ENCODE measurements at regions of chr13 and their contacts with region 1.

Region 1: GRCh38 chr13:52968074-52968700 is 60.4 kb upstream of the OLFM4 start:
- DNase-seq: peak; percentile 16
- ATAC-seq: peak; percentile 100
- H3K4me3 ChIP-seq: no peak overlapping the region
- H3K27ac ChIP-seq: no peak overlapping the region
- H3K4me1 ChIP-seq: no peaks in the 10 kb centered on the region
- H3K27me3 ChIP-seq: no peaks in the 10 kb centered on the region; a peak in 1 of 4 replicates
- CTCF ChIP-seq: peak; percentile 98 to 100 (median 99)
- EP300 ChIP-seq: no peak
- POLR2A ChIP-seq: no peak
- RAD21 ChIP-seq: peak; percentile 91

Region 2: DNA sequence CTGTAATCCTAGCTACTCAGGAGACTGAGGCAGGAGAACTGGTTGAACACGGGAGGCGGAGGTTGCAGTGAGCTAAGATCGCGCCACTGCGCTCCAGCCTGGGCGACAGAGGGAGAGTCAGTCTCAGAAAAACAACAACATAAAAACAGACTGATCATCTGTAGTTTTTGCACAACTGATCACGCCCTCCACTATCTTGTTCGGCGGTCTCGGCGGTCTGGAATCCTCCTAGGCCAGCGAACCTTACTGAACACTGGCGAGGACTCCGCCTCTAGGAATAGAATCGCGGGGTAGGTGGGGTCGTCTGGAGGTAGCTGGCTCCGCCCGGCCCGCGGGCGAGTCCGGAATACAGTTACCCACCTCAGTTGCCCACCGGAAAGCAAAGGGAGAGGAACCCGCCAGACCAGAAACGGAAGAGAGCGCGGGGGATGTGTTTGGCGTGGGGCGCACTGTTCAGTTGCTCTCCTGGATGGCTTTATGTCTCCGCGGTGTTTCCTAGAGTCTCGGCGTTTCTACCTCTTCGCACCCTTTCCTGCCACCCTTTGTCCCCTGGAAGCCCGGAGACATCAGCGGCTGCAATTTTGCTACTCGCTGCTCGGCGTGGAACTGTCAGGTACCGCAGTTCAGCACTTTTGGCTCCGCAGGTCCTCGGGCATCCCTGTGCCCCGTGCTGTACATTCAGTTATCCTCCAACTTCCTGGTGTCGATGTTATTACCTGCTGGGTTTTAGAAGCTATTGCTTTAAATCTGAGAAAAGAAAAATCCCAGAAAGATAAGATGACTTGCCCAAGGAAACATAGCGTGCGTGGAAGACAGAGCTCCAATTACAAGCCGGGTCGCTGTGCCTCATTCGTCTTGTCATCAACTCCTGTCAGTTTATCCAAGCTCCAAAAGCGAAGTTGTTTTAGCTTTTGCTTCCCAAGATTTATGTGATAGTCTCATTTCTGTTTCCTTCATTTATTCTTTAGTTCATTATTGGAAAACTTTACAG is 350.8 kb before region 1 on chr13:
- CTCF ChIA-PET with region 1: interaction called, 5 read pairs
- POLR2A ChIA-PET with region 1: no interaction called
- RAD21 ChIA-PET with region 1: interaction called, 4 read pairs
- SMC1A ChIA-PET with region 1: interaction called, 6 read pairs
- in situ Hi-C with region 1: loop called (anchors 10 kb)
- intact Hi-C with region 1: no loop called
- DNase-seq: peak; percentile 56
- ATAC-seq: peak; percentile 96
- H3K4me3 ChIP-seq: peak overlapping the region; percentile 98
- H3K27ac ChIP-seq: peak overlapping the region; percentile 58
- H3K4me1 ChIP-seq: peaks cover 6% of the 10 kb centered on the region; the same call in 1 of the 2 replicates
- H3K27me3 ChIP-seq: no peaks in the 10 kb centered on the region
- CTCF ChIP-seq: no peak
- EP300 ChIP-seq: no peak; a peak in 1 of 4 replicates
- POLR2A ChIP-seq: peak; percentile 86
- RAD21 ChIP-seq: 0 out of 2 replicates have a peak, but pooled peaks have one; percentile 9

Region 3: DNA sequence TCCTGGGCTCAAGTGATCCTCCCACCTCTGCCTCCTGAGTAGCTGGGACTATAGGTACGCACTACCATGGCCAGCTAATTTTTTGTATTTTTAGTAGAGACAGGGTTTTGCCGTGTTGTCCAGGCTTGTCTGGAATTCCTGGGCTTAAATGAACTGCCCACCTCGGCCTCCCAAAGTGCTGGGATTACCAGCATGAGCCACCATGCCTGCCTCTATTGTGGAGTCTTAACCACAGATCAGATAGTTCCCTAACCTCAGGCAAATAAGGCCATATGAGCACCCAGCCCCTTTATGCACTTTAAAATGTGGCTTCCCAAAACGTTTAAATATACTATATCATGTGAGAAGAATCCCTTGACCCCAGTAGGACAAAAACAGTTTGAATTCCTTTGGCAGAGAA is 245.0 kb before region 1 on chr13:
- CTCF ChIA-PET with region 1: interaction called, 6 read pairs
- POLR2A ChIA-PET with region 1: no interaction called
- RAD21 ChIA-PET with region 1: interaction called, 15 read pairs
- SMC1A ChIA-PET with region 1: no interaction called
- in situ Hi-C with region 1: no loop called
- intact Hi-C with region 1: no loop called
- DNase-seq: no peak
- ATAC-seq: no peak
- H3K4me3 ChIP-seq: no peak overlapping the region
- H3K27ac ChIP-seq: no peak overlapping the region
- H3K4me1 ChIP-seq: no peaks in the 10 kb centered on the region
- H3K27me3 ChIP-seq: no peaks in the 10 kb centered on the region
- CTCF ChIP-seq: no peak
- EP300 ChIP-seq: no peak
- POLR2A ChIP-seq: no peak
- RAD21 ChIP-seq: no peak

Region 4: GRCh38 chr13:52862358-52863206 is 105.6 kb before region 1 on chr13:
- CTCF ChIA-PET with region 1: interaction called, 44 read pairs
- POLR2A ChIA-PET with region 1: no interaction called
- RAD21 ChIA-PET with region 1: interaction called, 9 read pairs
- SMC1A ChIA-PET with region 1: interaction called, 8 read pairs
- in situ Hi-C with region 1: no loop called
- intact Hi-C with region 1: loop called (anchors 2 kb)
- DNase-seq: no peak
- ATAC-seq: peak; percentile 62
- H3K4me3 ChIP-seq: no peak overlapping the region
- H3K27ac ChIP-seq: no peak overlapping the region
- H3K4me1 ChIP-seq: peaks cover 9% of the 10 kb centered on the region
- H3K27me3 ChIP-seq: no peaks in the 10 kb centered on the region
- CTCF ChIP-seq: peak; percentile 58 to 68 (median 63)
- EP300 ChIP-seq: no peak
- POLR2A ChIP-seq: no peak
- RAD21 ChIP-seq: 0 out of 2 replicates have a peak, but pooled peaks have one; percentile 4

Region 5: DNA sequence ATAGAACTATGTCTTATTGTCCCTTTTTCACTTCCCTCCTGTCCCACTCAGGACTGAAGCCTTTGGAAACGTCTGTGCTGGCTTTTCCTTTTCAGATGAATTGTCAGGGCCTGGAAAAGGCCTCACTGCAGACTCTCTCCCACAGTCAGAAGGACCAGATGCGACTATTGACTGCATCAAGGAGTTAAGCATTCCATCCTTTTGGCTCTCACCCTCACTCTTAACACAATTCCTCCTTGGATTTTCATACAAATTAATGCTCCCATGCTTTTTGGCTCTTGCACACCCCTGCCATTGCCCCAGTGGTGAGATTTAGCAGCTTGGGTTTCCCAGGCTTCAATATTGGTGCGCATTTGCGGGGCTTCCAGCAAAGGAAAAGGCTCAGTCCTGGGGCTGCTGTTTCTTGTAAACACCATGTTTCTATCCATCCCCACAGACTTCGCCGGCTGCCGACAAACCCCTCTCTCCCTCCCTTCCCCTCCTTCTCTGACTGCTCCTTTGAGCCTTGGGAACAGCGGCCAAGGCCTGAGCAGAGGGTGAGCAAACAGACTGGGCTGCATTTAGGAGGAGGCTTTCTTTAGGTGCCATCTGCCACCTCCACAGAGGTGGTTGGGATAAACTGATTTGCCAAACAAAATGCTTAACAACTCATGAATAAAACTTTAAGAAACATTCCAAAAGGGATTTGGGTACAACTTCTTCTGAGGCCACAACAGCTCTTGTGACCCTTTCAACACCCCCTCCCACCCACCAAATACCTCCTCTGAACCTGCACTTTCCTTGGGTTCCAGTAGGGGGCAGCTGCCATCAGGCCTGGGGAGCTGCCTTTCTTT is 71.1 kb before region 1 on chr13:
- CTCF ChIA-PET with region 1: interaction called, 23 read pairs
- POLR2A ChIA-PET with region 1: no interaction called
- RAD21 ChIA-PET with region 1: interaction called, 9 read pairs
- SMC1A ChIA-PET with region 1: interaction called, 13 read pairs
- in situ Hi-C with region 1: no loop called
- intact Hi-C with region 1: loop called (anchors 5 kb)
- DNase-seq: no peak
- ATAC-seq: peak; percentile 48; the same call in 2 of the 3 replicates
- H3K4me3 ChIP-seq: no peak overlapping the region
- H3K27ac ChIP-seq: no peak overlapping the region
- H3K4me1 ChIP-seq: no peaks in the 10 kb centered on the region
- H3K27me3 ChIP-seq: peaks cover 0 to 2% of the 10 kb centered on the region in 2 experiments; a peak in 1 of 4 replicates
- CTCF ChIP-seq: peak; percentile 42 to 75 (median 52); a peak in 5 of 6 replicates
- EP300 ChIP-seq: no peak
- POLR2A ChIP-seq: no peak
- RAD21 ChIP-seq: peak; percentile 53

Region 6: GRCh38 chr13:52911340-52911739 is 56.8 kb before region 1 on chr13:
- CTCF ChIA-PET with region 1: interaction called, 34 read pairs
- POLR2A ChIA-PET with region 1: no interaction called
- RAD21 ChIA-PET with region 1: interaction called, 13 read pairs
- SMC1A ChIA-PET with region 1: interaction called, 4 read pairs
- in situ Hi-C with region 1: no loop called
- intact Hi-C with region 1: no loop called
- DNase-seq: no peak
- ATAC-seq: no peak
- H3K4me3 ChIP-seq: no peak overlapping the region
- H3K27ac ChIP-seq: no peak overlapping the region
- H3K4me1 ChIP-seq: no peaks in the 10 kb centered on the region
- H3K27me3 ChIP-seq: peaks cover 0 to 1% of the 10 kb centered on the region in 2 experiments; a peak in 1 of 4 replicates
- CTCF ChIP-seq: no peak
- EP300 ChIP-seq: no peak
- POLR2A ChIP-seq: no peak
- RAD21 ChIP-seq: no peak

Region 7: DNA sequence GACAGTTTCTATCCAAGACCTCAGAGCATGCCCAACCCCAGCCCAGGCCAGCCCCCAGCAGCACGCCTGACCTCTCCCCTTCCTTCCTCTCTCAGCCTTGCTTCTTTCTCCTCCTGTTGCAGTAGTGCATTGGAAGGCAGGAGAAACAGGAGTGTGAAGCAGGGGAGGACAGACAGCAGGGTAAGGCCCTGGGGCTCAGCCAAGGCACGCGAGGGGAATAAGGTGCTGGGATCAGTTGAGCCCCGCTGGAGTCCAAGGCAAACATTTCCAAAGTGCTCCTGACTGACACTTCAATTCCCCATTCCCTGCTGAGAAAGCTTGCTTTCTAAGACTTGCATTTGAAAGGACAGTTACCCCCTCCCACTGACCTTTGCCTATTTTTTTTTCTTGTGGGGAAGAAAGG is 12.7 kb before region 1 on chr13:
- CTCF ChIA-PET with region 1: interaction called, 35 read pairs
- POLR2A ChIA-PET with region 1: no interaction called
- RAD21 ChIA-PET with region 1: interaction called, 3 read pairs
- SMC1A ChIA-PET with region 1: interaction called, 13 read pairs
- in situ Hi-C with region 1: no loop called
- intact Hi-C with region 1: no loop called
- DNase-seq: no peak
- ATAC-seq: no peak
- H3K4me3 ChIP-seq: no peak overlapping the region
- H3K27ac ChIP-seq: no peak overlapping the region
- H3K4me1 ChIP-seq: no peaks in the 10 kb centered on the region
- H3K27me3 ChIP-seq: no peaks in the 10 kb centered on the region
- CTCF ChIP-seq: no peak
- EP300 ChIP-seq: no peak
- POLR2A ChIP-seq: no peak
- RAD21 ChIP-seq: no peak

Region 8: DNA sequence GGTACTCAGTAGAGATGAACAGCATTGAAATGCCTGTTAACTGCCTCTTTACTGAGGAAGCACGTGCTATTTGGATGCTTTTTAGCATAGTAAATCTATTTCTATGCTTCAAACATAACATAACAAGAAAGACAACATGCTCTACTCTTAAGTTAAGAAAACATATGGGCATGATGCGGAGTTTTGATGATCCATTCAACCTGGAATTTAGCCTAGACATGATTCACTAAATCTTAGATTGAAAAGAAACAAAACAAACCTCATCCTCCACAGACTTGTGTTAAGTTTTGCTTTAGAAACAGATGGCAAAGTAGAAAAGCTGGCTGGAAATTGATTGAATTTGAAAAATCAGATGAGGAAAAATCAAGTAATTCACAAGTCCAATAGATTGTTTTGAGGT is 654.3 kb after region 1 on chr13:
- CTCF ChIA-PET with region 1: no interaction called
- POLR2A ChIA-PET with region 1: no interaction called
- RAD21 ChIA-PET with region 1: no interaction called
- SMC1A ChIA-PET with region 1: no interaction called
- in situ Hi-C with region 1: no loop called
- intact Hi-C with region 1: no loop called
- DNase-seq: no peak
- ATAC-seq: no peak
- H3K4me3 ChIP-seq: no peak overlapping the region
- H3K27ac ChIP-seq: no peak overlapping the region
- H3K4me1 ChIP-seq: no peaks in the 10 kb centered on the region
- H3K27me3 ChIP-seq: no peaks in the 10 kb centered on the region
- CTCF ChIP-seq: no peak
- EP300 ChIP-seq: no peak
- POLR2A ChIP-seq: no peak
- RAD21 ChIP-seq: no peak

Region 9: GRCh38 chr13:53775807-53776206 is 807.6 kb after region 1 on chr13:
- CTCF ChIA-PET with region 1: no interaction called
- POLR2A ChIA-PET with region 1: no interaction called
- RAD21 ChIA-PET with region 1: no interaction called
- SMC1A ChIA-PET with region 1: no interaction called
- in situ Hi-C with region 1: no loop called
- intact Hi-C with region 1: no loop called
- DNase-seq: no peak
- ATAC-seq: no peak
- H3K4me3 ChIP-seq: no peak overlapping the region
- H3K27ac ChIP-seq: no peak overlapping the region
- H3K4me1 ChIP-seq: no peaks in the 10 kb centered on the region
- H3K27me3 ChIP-seq: no peaks in the 10 kb centered on the region
- CTCF ChIP-seq: no peak
- EP300 ChIP-seq: no peak
- POLR2A ChIP-seq: no peak
- RAD21 ChIP-seq: no peak